Activated naive CD4-positive, alpha-beta T cell treated with anti-CD3 and anti-CD28 coated beads, Interleukin-2, amount 10 ng/mL, durations not matched to agents 7 days and 5 days (primary cell): ENCODE measurements at regions of chr1 and their contacts with region 1.

Region 1: GRCh38 chr1:95245029-95245428 is 11.0 kb downstream of the RWDD3 start:
- DNase-seq: no peak
- H3K4me3 Mint-ChIP-seq: no peak overlapping the region
- H3K27ac Mint-ChIP-seq: no peak overlapping the region
- H3K4me1 Mint-ChIP-seq: no peaks in the 10 kb centered on the region
- H3K27me3 Mint-ChIP-seq: no peaks in the 10 kb centered on the region

Region 2: GRCh38 chr1:95233737-95234500 is 11.1 kb before region 1 on chr1 and contains the start of gene RWDD3:
- CTCF ChIA-PET with region 1: interaction called, 11 read pairs
- DNase-seq: peak; percentile 93
- H3K4me3 Mint-ChIP-seq: peak within 1 kb of the TSS; percentile 91
- H3K27ac Mint-ChIP-seq: peak within 1 kb of the TSS; percentile 88
- H3K4me1 Mint-ChIP-seq: peaks cover 24% of the 10 kb centered on the region
- H3K27me3 Mint-ChIP-seq: peaks cover 19% of the 10 kb centered on the region

Region 3: GRCh38 chr1:95311014-95311413 is 66.0 kb after region 1 on chr1:
- CTCF ChIA-PET with region 1: no interaction called
- DNase-seq: no peak
- H3K4me3 Mint-ChIP-seq: no peak overlapping the region
- H3K27ac Mint-ChIP-seq: no peak overlapping the region
- H3K4me1 Mint-ChIP-seq: no peaks in the 10 kb centered on the region
- H3K27me3 Mint-ChIP-seq: no peaks in the 10 kb centered on the region